Caco-2 (cell line): ENCODE measurements at regions of chr15 and their contacts with region 1.

Region 1: GRCh38 chr15:36977659-36978058 is 122.7 kb downstream of the MEIS2 start:
- DNase-seq: peak; percentile 57 to 63
- H3K4me3 ChIP-seq: no peak overlapping the region
- H3K4me3 Mint-ChIP-seq: no peak overlapping the region
- H3K27ac Mint-ChIP-seq: no peak overlapping the region
- H3K4me1 ChIP-seq: peaks cover 16% of the 10 kb centered on the region
- H3K4me1 Mint-ChIP-seq: peaks cover 7% of the 10 kb centered on the region
- H3K27me3 ChIP-seq: no peaks in the 10 kb centered on the region
- H3K27me3 Mint-ChIP-seq: no peaks in the 10 kb centered on the region
- CTCF ChIP-seq: no peak

Region 2: GRCh38 chr15:36912311-36912722 is 65.3 kb before region 1 on chr15:
- CTCF ChIA-PET with region 1: no interaction called
- POLR2A ChIA-PET with region 1: no interaction called
- intact Hi-C with region 1: loop called (anchors 1 kb)
- DNase-seq: peak; percentile 69 to 77
- H3K4me3 ChIP-seq: no peak overlapping the region
- H3K4me3 Mint-ChIP-seq: peak overlapping the region; percentile 2
- H3K27ac Mint-ChIP-seq: peak overlapping the region; percentile 20
- H3K4me1 ChIP-seq: peaks cover 54% of the 10 kb centered on the region
- H3K4me1 Mint-ChIP-seq: peaks cover 17% of the 10 kb centered on the region
- H3K27me3 ChIP-seq: no peaks in the 10 kb centered on the region
- H3K27me3 Mint-ChIP-seq: no peaks in the 10 kb centered on the region
- CTCF ChIP-seq: no peak

Region 3: GRCh38 chr15:36965570-36966342 is 11.9 kb before region 1 on chr15:
- CTCF ChIA-PET with region 1: no interaction called
- POLR2A ChIA-PET with region 1: no interaction called
- intact Hi-C with region 1: no loop called
- DNase-seq: no peak
- H3K4me3 ChIP-seq: no peak overlapping the region
- H3K4me3 Mint-ChIP-seq: no peak overlapping the region
- H3K27ac Mint-ChIP-seq: no peak overlapping the region
- H3K4me1 ChIP-seq: peaks cover 12% of the 10 kb centered on the region
- H3K4me1 Mint-ChIP-seq: peaks cover 5% of the 10 kb centered on the region
- H3K27me3 ChIP-seq: no peaks in the 10 kb centered on the region; the same call in 1 of the 2 replicates
- H3K27me3 Mint-ChIP-seq: peaks cover 4% of the 10 kb centered on the region
- CTCF ChIP-seq: no peak

Region 4: GRCh38 chr15:37015035-37015434 is 37.4 kb after region 1 on chr15:
- CTCF ChIA-PET with region 1: no interaction called
- POLR2A ChIA-PET with region 1: no interaction called
- intact Hi-C with region 1: loop called (anchors 2 kb)
- DNase-seq: peak in 1 of 2 experiments; percentile 8
- H3K4me3 ChIP-seq: no peak overlapping the region
- H3K4me3 Mint-ChIP-seq: no peak overlapping the region
- H3K27ac Mint-ChIP-seq: peak overlapping the region; percentile 8
- H3K4me1 ChIP-seq: peaks cover 46% of the 10 kb centered on the region
- H3K4me1 Mint-ChIP-seq: peaks cover 17% of the 10 kb centered on the region
- H3K27me3 ChIP-seq: no peaks in the 10 kb centered on the region
- H3K27me3 Mint-ChIP-seq: no peaks in the 10 kb centered on the region
- CTCF ChIP-seq: no peak

Region 5: GRCh38 chr15:37034835-37035748 is 57.4 kb after region 1 on chr15:
- CTCF ChIA-PET with region 1: no interaction called
- POLR2A ChIA-PET with region 1: no interaction called
- intact Hi-C with region 1: loop called (anchors 5 kb)
- DNase-seq: peak; percentile 49 to 63
- H3K4me3 ChIP-seq: no peak overlapping the region
- H3K4me3 Mint-ChIP-seq: no peak overlapping the region
- H3K27ac Mint-ChIP-seq: peak overlapping the region; percentile 30
- H3K4me1 ChIP-seq: peaks cover 19% of the 10 kb centered on the region
- H3K4me1 Mint-ChIP-seq: peaks cover 7% of the 10 kb centered on the region
- H3K27me3 ChIP-seq: no peaks in the 10 kb centered on the region
- H3K27me3 Mint-ChIP-seq: no peaks in the 10 kb centered on the region
- CTCF ChIP-seq: no peak

Region 6: DNA sequence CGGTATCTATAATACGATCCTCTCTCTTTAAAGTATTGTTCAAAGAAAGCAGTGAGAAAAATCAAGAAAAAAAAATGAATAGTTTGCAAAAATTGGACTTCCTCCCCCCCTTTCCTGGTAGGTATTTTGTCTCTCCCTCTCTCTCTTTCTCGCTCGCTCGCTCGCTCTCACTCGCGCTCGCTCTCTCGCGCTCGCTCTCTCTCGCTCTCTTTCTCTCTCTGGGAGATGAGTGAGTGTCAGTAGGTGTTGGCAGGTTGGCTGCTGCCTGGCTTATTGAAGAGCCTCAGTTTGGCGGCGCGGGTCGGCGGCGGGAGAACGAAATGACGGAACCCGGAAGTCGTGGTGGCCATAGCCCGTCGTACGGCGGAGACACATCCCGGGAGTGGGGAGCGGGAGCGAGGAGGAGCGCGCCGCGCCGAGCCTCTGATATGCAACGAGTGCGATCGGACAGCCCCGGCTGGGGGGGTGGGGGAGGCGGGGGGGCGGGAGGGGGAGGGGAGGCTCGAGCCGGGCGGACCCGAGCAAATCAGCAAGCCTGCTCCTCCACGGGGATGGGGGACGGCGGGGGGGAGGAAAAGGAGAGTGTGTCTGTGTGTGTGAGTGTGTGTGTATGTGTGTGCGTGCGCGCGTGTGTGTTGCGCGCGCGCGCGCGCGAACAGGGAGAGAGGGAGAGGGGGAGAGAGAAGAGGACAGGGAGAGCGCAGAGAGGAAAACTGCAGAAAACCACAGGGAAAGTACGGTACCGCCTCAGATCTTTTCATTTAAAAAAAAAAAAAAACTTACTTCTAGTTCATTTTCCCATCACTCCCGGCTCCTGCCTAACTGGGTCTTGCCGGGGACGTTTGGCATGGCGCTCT is 122.7 kb after region 1 on chr15 and contains the start of gene MEIS2:
- CTCF ChIA-PET with region 1: no interaction called
- POLR2A ChIA-PET with region 1: no interaction called
- intact Hi-C with region 1: loop called (anchors 5 kb)
- DNase-seq: peak; percentile 92 to 96
- H3K4me3 ChIP-seq: peak within 1 kb of the TSS; percentile 89
- H3K4me3 Mint-ChIP-seq: peak within 1 kb of the TSS; percentile 90
- H3K27ac Mint-ChIP-seq: peak within 1 kb of the TSS; percentile 91
- H3K4me1 ChIP-seq: peaks cover 5% of the 10 kb centered on the region; the same call in 1 of the 2 replicates
- H3K4me1 Mint-ChIP-seq: peaks cover 17% of the 10 kb centered on the region
- H3K27me3 ChIP-seq: no peaks in the 10 kb centered on the region
- H3K27me3 Mint-ChIP-seq: no peaks in the 10 kb centered on the region
- CTCF ChIP-seq: no peak
- total RNA-seq, gene MEIS2: 28.5 and 28.7 TPM in 2 replicates